CD4-positive, alpha-beta memory T cell (primary cell): ENCODE measurements at regions of chr17 and their contacts with region 1.

Region 1: DNA sequence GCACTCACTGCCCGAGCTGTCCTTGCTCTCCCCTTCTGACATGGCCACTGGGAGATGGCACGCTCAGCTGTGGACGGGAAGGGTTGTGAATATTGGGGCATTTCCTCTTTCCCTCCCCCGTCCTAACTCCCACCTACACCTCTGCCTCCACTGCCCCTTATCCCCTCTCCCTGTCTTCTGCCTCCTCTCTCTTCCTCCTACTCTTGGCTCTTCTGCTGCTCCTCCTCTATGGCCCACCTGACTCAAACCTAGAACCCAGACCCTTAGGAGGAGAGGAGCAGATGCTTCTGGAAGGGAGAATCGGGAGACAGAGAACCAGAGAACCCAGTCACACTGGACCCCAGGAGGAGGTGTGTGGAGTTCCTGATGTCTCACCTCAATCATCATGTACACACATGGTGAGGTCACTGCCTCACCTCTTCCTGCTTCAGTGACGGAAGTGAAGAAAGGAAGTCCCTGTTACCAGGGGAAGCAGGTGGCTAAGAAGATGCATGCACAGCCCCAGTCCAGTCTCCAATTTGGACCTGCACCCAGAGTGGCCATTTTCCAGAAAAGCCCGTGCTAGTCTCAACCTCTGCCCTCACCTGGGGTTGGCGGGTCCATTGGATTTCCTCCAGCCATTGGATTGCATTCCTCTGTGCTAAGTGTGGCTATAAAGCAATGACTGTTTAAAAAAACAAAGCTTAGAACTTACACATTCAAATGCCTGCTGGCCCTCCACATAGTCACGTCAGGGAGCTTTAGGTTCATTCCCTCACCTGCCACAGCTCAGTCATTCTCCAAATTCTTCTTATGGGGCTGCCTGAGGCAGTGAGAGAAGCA is 4.0 kb downstream of the RNF222 start:
- DNase-seq: peak; percentile 40 to 77 (median 56)
- H3K4me3 ChIP-seq: no peak overlapping the region
- H3K4me3 Mint-ChIP-seq: peak overlapping the region in 5 of 8 donors; percentile 46 to 68 (median 60)
- H3K27ac ChIP-seq: no peak overlapping the region
- H3K27ac Mint-ChIP-seq: peak overlapping the region; percentile 64 to 96 (median 93)
- H3K4me1 ChIP-seq: peaks cover 19% of the 10 kb centered on the region
- H3K4me1 Mint-ChIP-seq: peaks cover 9 to 15% (median 10%) of the 10 kb centered on the region in 4 donors
- H3K27me3 ChIP-seq: peaks cover 4% of the 10 kb centered on the region
- H3K27me3 Mint-ChIP-seq: peaks cover 6 to 13% of the 10 kb centered on the region in 2 donors

Region 2: DNA sequence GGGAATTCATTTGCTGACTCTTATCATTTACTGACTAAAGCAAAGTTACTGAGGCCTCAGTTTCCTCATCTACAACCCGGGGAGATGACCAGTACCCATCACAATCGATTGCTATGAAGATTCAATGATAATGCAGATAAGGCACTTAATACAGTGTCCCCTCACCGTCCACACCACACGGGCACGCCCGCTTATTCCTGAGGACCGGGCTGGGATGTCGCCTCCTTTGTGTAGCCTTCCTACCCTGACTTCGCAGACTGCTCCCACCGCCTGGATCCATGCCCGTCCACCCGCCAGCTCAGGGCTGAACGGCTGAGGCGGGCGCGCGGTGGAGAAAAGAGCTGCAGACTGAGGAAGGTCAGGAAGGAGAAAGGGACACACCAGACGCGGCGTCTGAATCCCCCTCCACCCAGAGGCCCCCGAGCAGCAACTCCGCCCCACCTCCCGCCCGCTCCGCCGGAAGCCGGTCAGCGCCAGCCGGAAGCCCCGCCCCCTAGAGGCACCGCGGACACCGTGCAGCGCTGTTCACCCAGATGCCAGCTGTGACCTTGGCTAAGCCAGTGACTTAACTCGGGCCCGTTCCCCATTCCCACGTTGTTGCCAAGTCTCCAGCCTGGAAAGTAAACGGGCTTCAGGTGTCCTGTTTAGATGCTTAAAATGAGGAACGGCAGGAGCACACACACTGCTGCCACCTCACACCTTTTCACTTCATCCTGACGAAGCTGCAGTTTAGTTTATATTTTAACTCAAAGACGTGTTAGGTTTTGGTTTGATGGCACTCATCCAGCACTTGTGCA is 17.2 kb before region 1 on chr17 and contains the start of gene KRABD2:
- CTCF ChIA-PET with region 1: interaction called, 7 read pairs
- POLR2A ChIA-PET with region 1: interaction called, 18 read pairs
- intact Hi-C with region 1: no loop called
- DNase-seq: peak; percentile 84 to 91 (median 86)
- H3K4me3 ChIP-seq: peak within 1 kb of the TSS; percentile 86 to 97
- H3K4me3 Mint-ChIP-seq: peak within 1 kb of the TSS; percentile 88 to 91 (median 90)
- H3K27ac ChIP-seq: peak within 1 kb of the TSS; percentile 85
- H3K27ac Mint-ChIP-seq: peak within 1 kb of the TSS; percentile 87 to 93 (median 92)
- H3K4me1 ChIP-seq: peaks cover 43% of the 10 kb centered on the region
- H3K4me1 Mint-ChIP-seq: peaks cover 28 to 66% (median 47%) of the 10 kb centered on the region in 4 donors
- H3K27me3 ChIP-seq: no peaks in the 10 kb centered on the region
- H3K27me3 Mint-ChIP-seq: no peaks in the 10 kb centered on the region

Region 3: DNA sequence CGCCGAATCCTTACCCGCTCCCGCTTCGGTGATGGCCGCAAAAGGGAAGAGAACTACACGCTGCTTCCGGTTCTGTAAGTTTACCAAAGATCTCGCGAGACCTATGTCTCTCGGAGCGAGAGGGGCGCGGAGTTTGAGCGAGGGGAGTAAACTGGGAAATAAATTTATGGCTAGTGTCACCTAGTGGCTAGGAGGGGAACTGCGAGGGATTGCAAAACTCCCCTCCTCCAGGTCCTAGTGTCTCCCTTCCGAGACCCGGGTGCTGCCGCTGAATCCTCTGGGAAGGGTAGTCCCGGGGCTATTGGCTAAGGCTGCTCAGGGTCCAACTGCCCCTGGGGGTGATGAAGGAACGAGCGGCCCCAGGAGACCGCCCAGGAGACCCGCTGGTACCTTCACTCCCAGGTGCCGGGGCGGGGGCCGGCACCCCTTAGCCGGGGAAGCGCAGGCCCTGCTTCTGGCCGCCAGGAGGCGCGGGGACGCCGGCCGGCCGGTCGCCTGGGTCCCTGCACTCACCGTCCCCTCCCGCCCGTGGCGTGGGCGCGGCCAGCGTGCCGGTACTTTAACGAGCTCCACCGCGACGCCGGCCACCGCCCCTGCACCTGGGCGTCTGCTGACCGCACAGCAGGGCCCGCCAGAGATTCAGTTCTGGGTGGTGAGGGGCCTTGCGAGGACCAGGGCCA is 10.3 kb before region 1 on chr17 and contains the start of gene RPL26:
- CTCF ChIA-PET with region 1: interaction called, 13 read pairs
- POLR2A ChIA-PET with region 1: interaction called, 9 read pairs
- intact Hi-C with region 1: no loop called
- DNase-seq: peak; percentile 96 to 98 (median 97)
- H3K4me3 ChIP-seq: peak within 1 kb of the TSS; percentile 74 to 95
- H3K4me3 Mint-ChIP-seq: peak within 1 kb of the TSS; percentile 95 to 99 (median 97)
- H3K27ac ChIP-seq: peak within 1 kb of the TSS; percentile 77
- H3K27ac Mint-ChIP-seq: peak within 1 kb of the TSS; percentile 94 to 97 (median 96)
- H3K4me1 ChIP-seq: peaks cover 49% of the 10 kb centered on the region
- H3K4me1 Mint-ChIP-seq: peaks cover 36 to 82% (median 54%) of the 10 kb centered on the region in 4 donors
- H3K27me3 ChIP-seq: no peaks in the 10 kb centered on the region
- H3K27me3 Mint-ChIP-seq: no peaks in the 10 kb centered on the region
- total RNA-seq, gene RPL26: 2,761 to 2,878 TPM

Region 4: GRCh38 chr17:8409966-8410864 is 16.6 kb after region 1 on chr17:
- CTCF ChIA-PET with region 1: interaction called, 10 read pairs
- POLR2A ChIA-PET with region 1: no interaction called
- intact Hi-C with region 1: no loop called
- DNase-seq: peak; percentile 69 to 73 (median 71)
- H3K4me3 ChIP-seq: no peak overlapping the region
- H3K4me3 Mint-ChIP-seq: peak overlapping the region in 2 of 8 donors; percentile 3 to 57
- H3K27ac ChIP-seq: no peak overlapping the region
- H3K27ac Mint-ChIP-seq: peak overlapping the region in 1 of 7 donors; percentile 57
- H3K4me1 ChIP-seq: peaks cover 20% of the 10 kb centered on the region
- H3K4me1 Mint-ChIP-seq: peaks cover 11 to 22% (median 15%) of the 10 kb centered on the region in 4 donors
- H3K27me3 ChIP-seq: no peaks in the 10 kb centered on the region
- H3K27me3 Mint-ChIP-seq: peaks cover 7 to 8% of the 10 kb centered on the region in 2 donors

Region 5: GRCh38 chr17:8522577-8522976 is 128.9 kb after region 1 on chr17:
- CTCF ChIA-PET with region 1: no interaction called
- POLR2A ChIA-PET with region 1: no interaction called
- intact Hi-C with region 1: no loop called
- DNase-seq: no peak
- H3K4me3 ChIP-seq: no peak overlapping the region
- H3K4me3 Mint-ChIP-seq: no peak overlapping the region
- H3K27ac ChIP-seq: no peak overlapping the region
- H3K27ac Mint-ChIP-seq: no peak overlapping the region
- H3K4me1 ChIP-seq: no peaks in the 10 kb centered on the region
- H3K4me1 Mint-ChIP-seq: no peaks in the 10 kb centered on the region
- H3K27me3 ChIP-seq: no peaks in the 10 kb centered on the region
- H3K27me3 Mint-ChIP-seq: peaks cover 0 to under 1% of the 10 kb centered on the region in 2 donors